Left ventricle myocardium inferior (tissue), 1 donor: ENCODE measurements at regions of chr7 and their contacts with region 1.

Region 1: GRCh38 chr7:80666376-80666775 is 27.9 kb downstream of the CD36 start:
- DNase-seq: no peak
- H3K4me3 ChIP-seq: no peak overlapping the region
- H3K27ac ChIP-seq: peak overlapping the region; percentile 48
- H3K4me1 ChIP-seq: peaks cover 58% of the 10 kb centered on the region
- H3K27me3 ChIP-seq: no peaks in the 10 kb centered on the region
- CTCF ChIP-seq: no peak

Region 2: DNA sequence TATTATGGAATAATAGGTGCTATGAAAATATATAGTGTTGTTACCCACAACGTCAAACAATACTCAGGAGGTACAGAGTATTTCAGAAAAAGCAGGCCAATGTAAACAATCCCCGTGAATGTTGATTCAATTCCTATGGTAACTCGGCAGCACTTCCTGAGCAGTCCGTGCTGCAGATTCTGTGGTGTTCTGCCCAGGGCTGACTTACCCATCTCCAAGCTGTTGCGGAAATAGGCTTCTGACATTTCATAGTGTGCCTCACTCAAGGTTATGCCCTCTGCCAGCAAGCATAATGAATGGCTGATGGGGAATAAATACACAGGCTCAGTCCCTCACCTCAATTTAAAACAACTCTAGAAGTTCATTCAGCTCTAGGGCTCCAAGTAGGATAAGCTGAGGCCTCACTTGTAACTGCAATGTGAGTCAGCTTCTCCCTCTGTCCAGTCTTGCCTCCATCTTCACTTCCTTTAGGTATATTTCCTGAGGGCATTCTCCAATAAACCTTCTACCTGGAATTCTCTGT is 354.2 kb before region 1 on chr7:
- intact Hi-C with region 1: no loop called
- DNase-seq: no peak
- H3K4me3 ChIP-seq: no peak overlapping the region
- H3K27ac ChIP-seq: no peak overlapping the region
- H3K4me1 ChIP-seq: peaks cover 12% of the 10 kb centered on the region
- H3K27me3 ChIP-seq: no peaks in the 10 kb centered on the region
- CTCF ChIP-seq: no peak

Region 3: DNA sequence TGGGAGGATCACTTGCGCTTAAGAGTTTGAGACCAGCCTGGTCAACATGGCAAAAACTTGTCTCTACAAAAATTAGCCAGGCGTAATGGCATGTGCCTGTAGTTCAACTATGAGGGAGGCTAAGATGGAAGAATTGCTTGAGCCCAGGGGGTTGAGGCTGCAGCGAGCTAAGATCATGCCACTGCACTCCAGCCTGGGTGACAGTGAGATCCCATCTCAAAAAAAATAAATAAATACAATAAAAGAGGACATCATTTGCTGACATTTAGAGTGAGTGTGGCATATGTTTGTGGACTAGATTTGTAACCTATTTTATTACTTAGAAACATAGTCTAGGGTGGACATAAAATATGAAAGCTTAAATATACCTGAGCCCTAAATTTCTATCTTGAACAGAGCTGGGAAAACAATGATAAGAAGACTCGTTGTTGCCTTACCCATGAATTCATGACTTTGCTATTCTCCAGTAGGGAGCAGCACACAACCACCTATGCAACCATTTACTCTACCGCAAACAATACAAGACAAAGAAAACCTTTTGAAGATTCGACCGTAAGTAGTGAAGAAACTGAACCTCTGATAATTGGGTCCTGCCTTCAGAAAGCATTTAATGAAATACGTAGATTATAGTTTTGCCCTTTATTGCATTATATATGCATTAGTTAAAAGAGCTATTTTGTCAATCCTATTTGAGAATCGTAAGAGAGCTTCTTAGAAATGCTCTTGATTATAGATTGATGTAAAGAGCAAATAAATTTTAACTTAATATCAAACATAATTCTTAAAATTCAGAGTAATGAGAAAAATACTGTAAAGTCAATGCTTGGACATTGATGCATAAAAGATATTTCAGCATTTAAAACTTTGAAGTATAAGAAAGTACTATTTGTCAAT is 238.0 kb before region 1 on chr7:
- intact Hi-C with region 1: loop called (anchors 5 kb)
- DNase-seq: no peak
- H3K4me3 ChIP-seq: peak overlapping the region; percentile 38
- H3K27ac ChIP-seq: peak overlapping the region; percentile 34
- H3K4me1 ChIP-seq: peaks cover 14% of the 10 kb centered on the region
- H3K27me3 ChIP-seq: no peaks in the 10 kb centered on the region
- CTCF ChIP-seq: peak; percentile 84